Cardiac septum (tissue), 1 donor: ENCODE measurements at regions of chr10 and their contacts with region 1.

Region 1: DNA sequence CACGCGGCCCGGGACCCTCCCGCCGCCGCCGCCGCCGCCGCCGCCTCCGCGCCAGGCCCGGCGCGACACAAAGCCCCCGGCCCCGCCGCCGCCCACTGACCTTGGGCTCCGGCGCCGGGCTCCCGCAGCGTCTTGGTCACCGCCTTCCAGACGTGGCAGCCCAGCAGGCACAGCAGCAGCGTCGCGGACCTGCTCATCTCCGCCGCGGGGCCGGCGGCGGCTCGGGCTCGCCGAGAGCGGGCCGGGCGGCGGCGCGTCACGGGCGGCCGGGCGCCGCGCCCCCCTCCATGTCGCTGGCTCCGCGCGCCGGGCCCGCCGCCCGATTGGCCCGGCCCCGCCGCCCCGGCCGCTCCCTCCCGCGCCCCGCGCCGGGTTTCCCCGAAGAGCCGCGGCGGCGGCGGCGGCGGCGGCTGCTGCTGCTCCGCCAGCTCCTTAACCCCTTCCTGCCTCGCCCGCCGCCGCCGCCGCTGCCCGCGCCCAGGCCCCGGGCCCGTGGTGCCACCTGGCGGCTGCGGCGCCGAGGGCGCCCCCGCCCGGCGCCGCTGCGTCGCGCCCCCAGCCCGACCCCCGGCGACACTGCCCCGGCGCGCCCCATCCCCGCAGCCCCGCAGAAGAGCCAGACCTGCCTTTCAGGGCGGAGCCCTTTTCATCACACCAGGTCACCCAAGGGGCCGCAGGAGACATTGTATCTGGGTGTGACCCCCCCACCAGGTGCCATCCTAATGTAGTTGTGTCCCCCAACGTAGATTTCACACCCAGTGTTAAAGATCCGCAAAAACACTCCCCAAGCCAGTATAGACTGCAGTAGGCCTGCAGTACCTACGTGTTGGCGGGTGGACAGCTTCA is at the start of gene FAM171A1:
- DNase-seq: no peak
- total RNA-seq, gene FAM171A1: 8.3 TPM

Region 2: GRCh38 chr10:15097011-15097812 is 273.9 kb before region 1 on chr10 and contains the start of gene RPP38:
- intact Hi-C with region 1: loop called (anchors 5 kb)
- DNase-seq: peak; percentile 98
- total RNA-seq, gene RPP38: 8.0 TPM

Region 3: DNA sequence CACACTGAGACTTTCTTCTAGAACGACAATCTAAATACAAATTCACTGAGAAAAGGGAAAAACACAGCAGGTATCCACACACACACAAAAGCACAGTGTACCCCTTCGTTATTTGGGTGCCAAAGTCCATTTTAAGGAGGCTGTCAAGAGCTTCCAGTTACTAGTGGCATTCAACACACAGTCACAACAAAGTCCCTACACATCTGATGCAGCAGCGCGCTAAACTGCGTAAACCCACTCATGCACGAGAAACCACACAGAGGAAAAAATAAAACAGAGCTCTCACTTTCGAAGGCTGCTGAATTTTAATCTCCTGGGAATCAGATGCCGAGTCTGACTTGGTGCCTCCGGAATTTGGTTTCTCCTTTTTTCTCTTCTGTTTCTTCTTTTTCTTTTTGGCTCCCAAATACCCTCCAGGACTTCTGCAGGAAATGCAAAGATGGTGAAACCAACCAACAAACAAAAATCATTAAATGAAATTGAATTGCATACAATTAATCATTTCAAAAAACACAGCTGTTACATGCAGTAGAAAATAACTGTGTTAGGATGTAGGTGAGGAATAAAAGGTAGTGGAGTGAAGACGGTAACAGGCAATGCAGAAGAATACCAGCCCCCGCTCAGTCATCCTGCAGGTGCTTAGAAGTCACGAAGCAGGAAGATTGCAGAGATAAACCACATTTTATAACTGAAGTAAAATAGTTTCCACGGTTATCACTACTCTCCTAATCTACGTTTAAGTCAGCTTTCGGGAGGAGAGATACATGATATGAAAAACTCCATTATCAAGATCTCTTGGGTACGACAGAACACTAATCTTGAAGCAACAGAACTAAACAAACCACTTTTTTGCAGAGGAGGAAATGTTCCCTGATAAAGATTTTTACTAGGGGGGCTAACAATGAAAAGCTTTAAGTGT is 229.7 kb before region 1 on chr10:
- intact Hi-C with region 1: no loop called
- DNase-seq: no peak

Region 4: DNA sequence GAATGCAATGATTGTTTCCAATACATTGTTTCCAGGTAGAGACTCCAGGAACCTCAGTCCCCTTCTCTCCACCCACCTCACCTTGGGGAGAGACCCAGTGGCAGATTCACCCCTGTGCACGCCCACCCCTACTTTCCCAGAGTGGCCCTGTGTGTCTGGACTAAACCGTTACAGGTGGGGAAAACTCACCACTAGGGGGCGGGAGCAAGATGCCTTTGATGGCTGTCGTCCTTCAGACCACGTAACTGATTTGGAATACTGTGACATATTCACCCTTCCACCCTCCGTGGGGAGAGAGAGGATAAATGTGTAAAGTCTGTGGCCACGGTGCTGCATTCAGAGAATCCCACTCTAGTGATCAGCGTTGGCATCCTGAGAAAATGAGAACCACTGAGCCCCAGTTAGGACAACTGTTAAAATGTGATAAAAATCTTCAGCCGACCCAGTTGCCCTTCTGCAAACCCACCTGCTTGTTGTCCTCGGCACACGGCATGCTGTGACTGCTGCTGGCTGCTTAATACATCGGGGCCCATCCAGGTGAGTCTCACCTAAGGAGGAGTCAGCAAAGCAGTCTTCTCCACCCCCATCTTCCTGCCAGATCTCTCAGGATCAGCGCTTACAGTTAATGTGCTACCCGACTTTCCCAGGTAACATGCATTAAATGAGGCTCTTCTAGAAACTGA is 161.1 kb before region 1 on chr10:
- intact Hi-C with region 1: loop called (anchors 5 kb)
- DNase-seq: peak; percentile 83

Region 5: DNA sequence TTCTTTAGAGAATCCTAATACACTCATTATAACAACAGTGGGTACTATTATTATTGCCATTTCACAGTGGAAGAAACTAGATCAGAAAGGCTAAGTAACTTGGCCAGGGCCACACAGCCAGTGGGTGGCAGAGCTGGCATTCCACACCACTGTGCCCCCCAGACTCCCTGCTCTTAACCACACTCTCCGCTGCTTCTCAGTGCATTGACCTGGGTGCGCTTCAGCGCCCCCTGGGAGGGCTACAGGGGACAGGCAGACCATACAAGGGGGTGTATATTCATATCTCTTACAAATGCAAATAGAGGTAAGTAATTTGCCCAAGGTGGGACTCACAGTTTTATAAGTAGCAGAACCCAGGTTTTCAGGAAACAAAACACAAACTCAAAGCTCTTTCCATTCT is 125.5 kb before region 1 on chr10:
- intact Hi-C with region 1: no loop called
- DNase-seq: no peak

Region 6: DNA sequence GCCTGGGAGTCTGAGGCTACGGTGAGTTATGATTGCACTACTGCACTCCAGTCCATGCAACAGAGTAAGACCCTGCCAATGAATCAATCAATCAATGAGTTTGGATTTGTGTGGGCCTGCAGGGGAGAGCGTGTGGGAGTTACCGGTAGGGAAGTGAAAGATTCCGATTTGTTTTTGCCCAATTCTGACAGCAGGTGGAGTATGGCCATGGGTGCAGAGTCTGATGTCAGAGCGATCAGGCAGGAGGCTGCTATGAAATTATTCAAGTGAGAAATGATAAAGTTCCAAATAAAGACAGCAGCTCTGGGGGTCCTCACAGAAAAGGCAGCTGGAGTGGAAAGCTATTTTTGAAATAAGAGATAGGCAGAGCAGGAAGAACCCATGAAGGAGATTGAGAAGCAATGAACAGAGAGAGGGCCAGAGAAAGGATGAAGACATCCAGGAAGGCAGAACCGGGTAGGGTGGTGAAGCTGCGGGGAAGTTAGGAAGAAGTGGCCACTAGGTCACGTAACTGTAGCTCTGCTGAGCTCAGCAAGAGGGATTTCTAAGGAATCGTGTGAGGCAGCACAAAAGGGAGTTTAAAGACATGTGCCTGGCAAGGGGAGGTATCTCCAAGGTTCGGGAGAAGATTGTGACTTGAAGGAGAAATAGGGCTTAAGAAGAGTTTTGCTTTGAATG is 108.9 kb before region 1 on chr10:
- intact Hi-C with region 1: loop called (anchors 5 kb)
- DNase-seq: no peak